PC-3 (cell line): ENCODE measurements at regions of chr12 and their contacts with region 1.

Region 1: GRCh38 chr12:50825372-50825838 is 17.3 kb upstream of the TMPRSS12 start:
- DNase-seq: peak; percentile 76
- ATAC-seq: peak; percentile 78
- H3K4me3 ChIP-seq: no peak overlapping the region
- H3K27ac ChIP-seq: no peak overlapping the region
- H3K4me1 ChIP-seq: no peaks in the 10 kb centered on the region
- H3K27me3 ChIP-seq: no peaks in the 10 kb centered on the region
- CTCF ChIP-seq: peak; percentile 66

Region 2: GRCh38 chr12:50149311-50149710 is 676.1 kb before region 1 on chr12:
- CTCF ChIA-PET with region 1: no interaction called
- POLR2A ChIA-PET with region 1: no interaction called
- intact Hi-C with region 1: no loop called
- DNase-seq: no peak
- ATAC-seq: no peak
- H3K4me3 ChIP-seq: no peak overlapping the region
- H3K27ac ChIP-seq: no peak overlapping the region
- H3K4me1 ChIP-seq: no peaks in the 10 kb centered on the region
- H3K27me3 ChIP-seq: no peaks in the 10 kb centered on the region
- CTCF ChIP-seq: no peak

Region 3: GRCh38 chr12:50581201-50582184 is 243.9 kb before region 1 on chr12:
- CTCF ChIA-PET with region 1: interaction called, 10 read pairs
- POLR2A ChIA-PET with region 1: no interaction called
- intact Hi-C with region 1: no loop called
- DNase-seq: peak; percentile 84
- ATAC-seq: peak; percentile 77
- H3K4me3 ChIP-seq: peak overlapping the region; percentile 40
- H3K27ac ChIP-seq: peak overlapping the region; percentile 95
- H3K4me1 ChIP-seq: peaks cover 37% of the 10 kb centered on the region
- H3K27me3 ChIP-seq: no peaks in the 10 kb centered on the region
- CTCF ChIP-seq: no peak

Region 4: GRCh38 chr12:50763639-50764285 is 61.6 kb before region 1 on chr12 and contains the start of gene ATF1:
- CTCF ChIA-PET with region 1: interaction called, 10 read pairs
- POLR2A ChIA-PET with region 1: interaction called, 11 read pairs
- intact Hi-C with region 1: loop called (anchors 1 kb)
- DNase-seq: peak; percentile 91
- ATAC-seq: peak; percentile 83
- H3K4me3 ChIP-seq: peak within 1 kb of the TSS; percentile 91
- H3K27ac ChIP-seq: peak within 1 kb of the TSS; percentile 97
- H3K4me1 ChIP-seq: peaks cover 25% of the 10 kb centered on the region
- H3K27me3 ChIP-seq: no peaks in the 10 kb centered on the region
- CTCF ChIP-seq: no peak
- total RNA-seq, gene ATF1: 46.7 and 67.2 TPM in 2 replicates

Region 5: GRCh38 chr12:50986966-50987737 is 161.7 kb after region 1 on chr12:
- CTCF ChIA-PET with region 1: interaction called, 56 read pairs
- POLR2A ChIA-PET with region 1: no interaction called
- intact Hi-C with region 1: loop called (anchors 1 kb)
- DNase-seq: peak; percentile 64
- ATAC-seq: peak; percentile 89
- H3K4me3 ChIP-seq: no peak overlapping the region
- H3K27ac ChIP-seq: no peak overlapping the region
- H3K4me1 ChIP-seq: peaks cover 4% of the 10 kb centered on the region; the same call in 1 of the 2 replicates
- H3K27me3 ChIP-seq: no peaks in the 10 kb centered on the region
- CTCF ChIP-seq: peak; percentile 74

Region 6: GRCh38 chr12:51025836-51026638 is 200.6 kb after region 1 on chr12 and contains the start of gene SLC11A2:
- CTCF ChIA-PET with region 1: interaction called, 9 read pairs
- POLR2A ChIA-PET with region 1: no interaction called
- intact Hi-C with region 1: loop called (anchors 1 kb)
- DNase-seq: peak; percentile 94
- ATAC-seq: peak; percentile 80
- H3K4me3 ChIP-seq: peak within 1 kb of the TSS; percentile 83
- H3K27ac ChIP-seq: peak within 1 kb of the TSS; percentile 82
- H3K4me1 ChIP-seq: peaks cover 34% of the 10 kb centered on the region
- H3K27me3 ChIP-seq: no peaks in the 10 kb centered on the region
- CTCF ChIP-seq: no peak
- total RNA-seq, gene SLC11A2: 28.4 and 38.8 TPM in 2 replicates